IMR-90 (cell line): ENCODE measurements at regions of chr4 and their contacts with region 1.

Region 1: DNA sequence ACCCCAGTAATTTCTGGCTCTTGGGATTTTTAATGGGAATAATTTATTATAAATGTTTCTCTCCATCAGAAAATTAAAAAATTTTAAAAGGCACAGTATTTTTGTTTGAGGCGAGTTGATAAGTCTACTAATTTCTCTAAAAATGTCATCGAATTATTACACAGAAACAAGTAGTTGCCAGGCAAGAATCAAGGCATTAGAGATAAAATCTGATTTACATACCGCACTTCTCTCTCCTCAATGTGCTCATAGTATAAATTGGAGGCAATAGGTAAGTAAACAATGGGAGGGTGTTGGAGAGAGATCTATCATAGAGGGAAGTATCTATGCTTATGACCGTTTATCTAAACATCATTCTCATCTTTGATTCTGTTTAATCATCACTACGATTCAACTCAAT is 599.8 kb downstream of the GRID2 start:
- DNase-seq: no peak
- ATAC-seq: no peak
- H3K4me3 ChIP-seq: no peak overlapping the region
- H3K27ac ChIP-seq: no peak overlapping the region
- H3K4me1 ChIP-seq: no peaks in the 10 kb centered on the region
- H3K27me3 ChIP-seq: no peaks in the 10 kb centered on the region
- CTCF ChIP-seq: no peak
- POLR2A ChIP-seq: no peak
- RAD21 ChIP-seq: no peak

Region 2: GRCh38 chr4:92952426-92952825 is 48.8 kb after region 1 on chr4:
- CTCF ChIA-PET with region 1: no interaction called
- POLR2A ChIA-PET with region 1: no interaction called
- dilution Hi-C with region 1: no loop called
- in situ Hi-C with region 1: no loop called
- intact Hi-C with region 1: loop called (anchors 10 kb)
- DNase-seq: no peak
- ATAC-seq: no peak
- H3K4me3 ChIP-seq: no peak overlapping the region
- H3K27ac ChIP-seq: no peak overlapping the region
- H3K4me1 ChIP-seq: no peaks in the 10 kb centered on the region
- H3K27me3 ChIP-seq: no peaks in the 10 kb centered on the region
- CTCF ChIP-seq: no peak
- POLR2A ChIP-seq: no peak
- RAD21 ChIP-seq: no peak